Prostate gland (tissue), 2 donors: ENCODE measurements at regions of chr2 and their contacts with region 1.

Region 1: GRCh38 chr2:119264781-119265692 is 41.4 kb downstream of the STEAP3 start:
- DNase-seq: peak; percentile 50
- H3K4me3 ChIP-seq: no peak overlapping the region
- H3K27ac ChIP-seq: no peak overlapping the region
- H3K4me1 ChIP-seq: no peaks in the 10 kb centered on the region
- H3K27me3 ChIP-seq: no peaks in the 10 kb centered on the region
- CTCF ChIP-seq: peak; percentile 49 to 83 (median 74)
- POLR2A ChIP-seq: no peak

Region 2: DNA sequence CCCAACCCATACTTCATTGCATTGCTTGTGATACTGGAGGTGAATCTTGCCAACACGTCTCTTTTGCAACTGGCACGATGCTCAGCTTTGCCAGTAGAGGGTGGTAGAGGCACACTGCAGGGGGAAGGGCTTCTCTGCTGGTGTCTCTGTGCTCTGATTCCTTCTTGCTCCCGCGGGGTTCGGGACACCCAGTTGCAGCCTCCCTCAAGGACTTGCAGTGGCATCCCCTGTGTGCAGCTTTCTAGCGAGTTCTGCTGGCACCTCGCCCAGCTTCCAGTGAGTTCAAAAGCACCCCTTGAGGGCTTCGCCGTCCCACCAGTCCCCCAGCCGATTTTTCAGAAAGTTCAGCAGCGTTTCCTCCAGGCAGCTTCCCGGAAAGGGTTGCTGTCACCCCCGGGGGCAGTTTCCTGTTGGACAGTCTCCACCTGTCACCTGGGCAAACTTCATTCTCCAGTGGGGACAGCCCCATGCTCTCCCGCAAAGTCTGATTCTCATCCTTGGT is 382.3 kb before region 1 on chr2:
- intact Hi-C with region 1: loop called (anchors 5 kb)
- DNase-seq: peak; percentile 23
- H3K4me3 ChIP-seq: no peak overlapping the region
- H3K27ac ChIP-seq: no peak overlapping the region
- H3K4me1 ChIP-seq: no peaks in the 10 kb centered on the region
- H3K27me3 ChIP-seq: no peaks in the 10 kb centered on the region
- CTCF ChIP-seq: peak in 3 of 4 experiments; percentile 56 to 72 (median 56)
- POLR2A ChIP-seq: no peak

Region 3: GRCh38 chr2:119223521-119224390 is 41.3 kb before region 1 on chr2 and contains the start of gene STEAP3:
- intact Hi-C with region 1: loop called (anchors 5 kb)
- DNase-seq: peak; percentile 62
- H3K4me3 ChIP-seq: peak within 1 kb of the TSS; percentile 53 to 62
- H3K27ac ChIP-seq: peak within 1 kb of the TSS; percentile 22 to 55
- H3K4me1 ChIP-seq: peaks cover 5% of the 10 kb centered on the region
- H3K27me3 ChIP-seq: no peaks in the 10 kb centered on the region
- CTCF ChIP-seq: no peak
- POLR2A ChIP-seq: peak; percentile 58
- total RNA-seq, gene STEAP3: 15.3 to 25.1 TPM